ENCODE measurements at regions of chr11 and their contacts with region 1.

Region 1: DNA sequence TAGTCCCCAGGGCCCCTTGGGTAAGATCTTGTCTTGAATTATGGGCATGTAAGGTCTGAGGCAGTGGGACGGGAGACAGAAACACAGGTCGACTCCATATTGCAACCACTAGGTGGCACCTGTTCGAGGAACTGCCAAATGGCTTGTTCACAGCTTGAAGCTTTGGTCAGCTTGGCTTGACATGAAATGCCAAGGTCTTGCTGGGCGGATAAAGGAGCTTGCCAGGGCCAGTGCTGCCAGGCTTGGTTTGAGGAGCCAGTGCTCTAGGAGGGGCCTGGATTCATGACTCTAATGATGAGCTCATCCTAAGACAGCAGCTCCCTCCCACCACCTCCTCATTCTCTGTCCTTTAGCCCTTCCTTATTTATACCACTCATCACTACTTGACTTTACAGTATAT is 11.9 kb upstream of the NRIP3 start:
- DNase-seq: peak; percentile 70
- H3K4me3 ChIP-seq: no peak overlapping the region
- H3K27ac ChIP-seq: no peak overlapping the region
- H3K4me1 ChIP-seq: peaks cover 0 to 6% of the 10 kb centered on the region in 2 donors
- H3K27me3 ChIP-seq: no peaks in the 10 kb centered on the region
- CTCF ChIP-seq: peak in 5 of 6 experiments; percentile 61 to 81 (median 78)
- POLR2A ChIP-seq: no peak

Region 2: DNA sequence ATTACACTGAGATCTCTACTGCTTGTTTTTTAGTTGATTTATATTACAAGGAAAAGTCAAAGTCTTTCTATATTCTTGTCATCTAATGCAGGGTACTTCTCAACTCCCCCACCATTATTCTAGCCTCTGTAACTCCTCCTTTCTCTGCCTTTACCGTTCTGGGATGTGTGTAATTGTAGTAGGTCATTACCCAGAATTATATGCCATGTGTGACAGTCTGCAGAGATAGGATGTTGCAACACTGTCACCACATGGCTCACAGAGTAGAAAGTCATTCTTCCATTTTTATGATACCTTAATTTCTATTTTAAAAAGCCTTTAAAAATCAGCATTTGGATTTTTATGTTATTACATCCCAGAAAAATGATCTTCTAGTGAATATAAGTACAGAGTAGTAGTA is 477.8 kb after region 1 on chr11:
- intact Hi-C with region 1: loop called (anchors 10 kb)
- DNase-seq: no peak
- H3K4me3 ChIP-seq: no peak overlapping the region
- H3K27ac ChIP-seq: peak overlapping the region in 1 of 3 donors; percentile 27
- H3K4me1 ChIP-seq: no peaks in the 10 kb centered on the region
- H3K27me3 ChIP-seq: no peaks in the 10 kb centered on the region
- CTCF ChIP-seq: no peak
- POLR2A ChIP-seq: no peak

Measured in thyroid gland (tissue), 4 donors.